ENCODE measurements at regions of chr5 and their contacts with region 1.

Region 1: DNA sequence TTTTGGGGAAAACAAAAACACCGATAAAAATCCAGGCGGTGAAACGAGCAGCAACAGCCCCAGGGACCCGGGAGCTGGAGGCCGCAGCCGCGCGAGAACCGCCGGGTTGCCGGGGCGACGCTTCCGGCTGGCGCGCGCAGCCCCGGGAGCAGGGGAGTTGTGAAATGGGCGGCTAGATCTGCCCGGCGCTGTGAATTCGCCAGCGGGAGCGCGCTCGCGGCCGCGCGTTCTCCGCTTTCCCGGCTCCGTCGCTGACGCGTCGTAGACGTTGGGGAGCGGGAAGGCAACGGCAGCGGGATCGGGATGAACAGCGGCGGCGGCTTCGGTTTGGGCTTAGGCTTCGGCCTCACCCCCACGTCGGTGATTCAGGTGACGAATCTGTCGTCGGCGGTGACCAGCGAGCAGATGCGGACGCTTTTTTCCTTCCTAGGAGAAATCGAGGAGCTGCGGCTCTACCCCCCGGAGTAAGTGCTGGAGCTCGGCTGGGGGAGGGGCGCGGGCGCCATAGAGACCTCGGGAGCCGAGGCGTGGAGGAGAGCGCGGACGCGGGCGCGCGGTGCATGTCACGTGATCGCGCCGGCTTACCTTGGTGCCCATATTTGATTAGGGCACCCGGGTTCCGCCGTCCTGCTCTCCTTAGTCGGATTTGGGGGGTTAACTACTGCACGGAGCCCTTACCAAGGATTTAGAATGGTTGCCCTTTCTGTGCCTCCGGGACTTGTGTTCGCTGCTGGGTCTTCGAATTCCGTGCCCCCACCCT is at the start of gene SREK1:
- DNase-seq: peak; percentile 90 to 93
- H3K4me3 ChIP-seq: peak within 1 kb of the TSS; percentile 92 to 96
- H3K27ac ChIP-seq: peak within 1 kb of the TSS; percentile 99 to 100
- H3K4me1 ChIP-seq: no peaks in the 10 kb centered on the region
- H3K27me3 ChIP-seq: no peaks in the 10 kb centered on the region
- CTCF ChIP-seq: peak in 1 of 4 experiments; percentile 2
- POLR2A ChIP-seq: peak; percentile 56 to 85
- total RNA-seq, gene SREK1: 37.7 to 226 (median 96.5) TPM

Region 2: GRCh38 chr5:65925601-65926275 is 218.5 kb before region 1 on chr5:
- intact Hi-C with region 1: loop called (anchors 2 kb)
- DNase-seq: peak; percentile 77 to 80
- H3K4me3 ChIP-seq: peak overlapping the region; percentile 92 to 96
- H3K27ac ChIP-seq: peak overlapping the region; percentile 99 to 100
- H3K4me1 ChIP-seq: no peaks in the 10 kb centered on the region
- H3K27me3 ChIP-seq: no peaks in the 10 kb centered on the region
- CTCF ChIP-seq: peak; percentile 26 to 59 (median 45)
- POLR2A ChIP-seq: peak; percentile 82 to 95

Measured in uterus (tissue), 4 donors.